IMR-90 (cell line): ENCODE measurements at regions of chr10 and their contacts with region 1.

Region 1: GRCh38 chr10:767211-767610 is 77.7 kb upstream of the DIP2C start:
- DNase-seq: no peak
- ATAC-seq: no peak
- H3K4me3 ChIP-seq: no peak overlapping the region
- H3K27ac ChIP-seq: no peak overlapping the region
- H3K4me1 ChIP-seq: no peaks in the 10 kb centered on the region
- H3K27me3 ChIP-seq: peaks cover 5% of the 10 kb centered on the region; the same call in 1 of the 2 replicates
- CTCF ChIP-seq: no peak
- POLR2A ChIP-seq: no peak
- RAD21 ChIP-seq: no peak

Region 2: DNA sequence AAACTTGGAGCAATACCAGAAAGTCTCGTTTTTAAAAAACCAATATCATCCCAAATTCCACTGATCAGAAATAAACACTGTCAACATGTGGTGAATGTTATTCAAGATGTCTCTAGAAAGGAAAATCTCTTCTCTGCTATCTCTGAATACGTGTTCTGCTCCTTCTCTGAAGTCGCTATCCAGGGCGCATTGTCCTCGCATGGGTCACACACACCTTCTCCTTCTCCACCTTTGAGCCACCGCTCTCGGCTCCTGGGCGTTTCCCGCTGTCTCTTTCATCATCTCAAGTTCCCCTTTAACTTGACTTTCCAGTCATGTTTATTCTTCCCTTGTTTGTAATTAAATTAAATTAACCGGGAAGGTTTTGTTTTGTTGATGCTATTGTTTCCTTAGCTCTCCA is 34.6 kb before region 1 on chr10:
- CTCF ChIA-PET with region 1: no interaction called
- POLR2A ChIA-PET with region 1: no interaction called
- dilution Hi-C with region 1: no loop called
- in situ Hi-C with region 1: no loop called
- intact Hi-C with region 1: loop called (anchors 2 kb)
- DNase-seq: no peak
- ATAC-seq: no peak
- H3K4me3 ChIP-seq: no peak overlapping the region
- H3K27ac ChIP-seq: no peak overlapping the region
- H3K4me1 ChIP-seq: no peaks in the 10 kb centered on the region
- H3K27me3 ChIP-seq: peaks cover 15% of the 10 kb centered on the region
- CTCF ChIP-seq: no peak
- POLR2A ChIP-seq: no peak
- RAD21 ChIP-seq: no peak

Region 3: GRCh38 chr10:1715836-1716245 is 948.6 kb after region 1 on chr10:
- CTCF ChIA-PET with region 1: no interaction called
- POLR2A ChIA-PET with region 1: no interaction called
- dilution Hi-C with region 1: no loop called
- in situ Hi-C with region 1: no loop called
- intact Hi-C with region 1: no loop called
- DNase-seq: no peak
- ATAC-seq: no peak
- H3K4me3 ChIP-seq: no peak overlapping the region
- H3K27ac ChIP-seq: no peak overlapping the region
- H3K4me1 ChIP-seq: no peaks in the 10 kb centered on the region
- H3K27me3 ChIP-seq: no peaks in the 10 kb centered on the region
- CTCF ChIP-seq: no peak
- POLR2A ChIP-seq: no peak
- RAD21 ChIP-seq: no peak